Psoas muscle (tissue), 8 donors: ENCODE measurements at regions of chr2 and their contacts with region 1.

Region 1: GRCh38 chr2:32772638-32773447 is 145.0 kb downstream of the TTC27 start:
- DNase-seq: no peak
- ATAC-seq: peak; percentile 61 to 80 (median 62)
- H3K4me3 ChIP-seq: no peak overlapping the region
- H3K27ac ChIP-seq: no peak overlapping the region
- H3K4me1 ChIP-seq: no peaks in the 10 kb centered on the region
- H3K27me3 ChIP-seq: no peaks in the 10 kb centered on the region
- CTCF ChIP-seq: peak; percentile 77

Region 2: GRCh38 chr2:32671885-32672533 is 100.8 kb before region 1 on chr2:
- intact Hi-C with region 1: no loop called
- DNase-seq: no peak
- ATAC-seq: no peak
- H3K4me3 ChIP-seq: no peak overlapping the region
- H3K27ac ChIP-seq: no peak overlapping the region
- H3K4me1 ChIP-seq: no peaks in the 10 kb centered on the region
- H3K27me3 ChIP-seq: no peaks in the 10 kb centered on the region
- CTCF ChIP-seq: no peak

Region 3: DNA sequence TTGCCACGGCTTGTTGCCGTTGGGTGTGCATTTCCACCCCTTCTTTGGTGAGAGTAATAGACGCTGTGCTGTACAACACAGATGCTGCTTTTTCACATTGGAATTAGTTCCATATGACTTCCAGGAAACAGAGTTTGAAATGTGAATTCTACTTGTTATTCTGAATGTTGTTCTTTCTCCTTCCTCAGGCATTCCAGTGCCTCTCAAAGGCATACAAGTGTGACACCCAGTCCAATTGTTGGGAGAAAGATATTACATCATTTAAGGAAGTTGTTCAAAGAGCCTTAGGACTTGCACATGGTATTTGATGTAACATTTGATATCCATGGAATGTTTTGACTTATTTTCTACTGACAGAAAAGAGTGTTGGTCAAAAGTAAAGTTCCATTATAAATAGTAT is 39.5 kb after region 1 on chr2:
- intact Hi-C with region 1: no loop called
- DNase-seq: no peak
- ATAC-seq: no peak
- H3K4me3 ChIP-seq: no peak overlapping the region
- H3K27ac ChIP-seq: no peak overlapping the region
- H3K4me1 ChIP-seq: no peaks in the 10 kb centered on the region
- H3K27me3 ChIP-seq: no peaks in the 10 kb centered on the region
- CTCF ChIP-seq: no peak

Region 4: GRCh38 chr2:32863803-32864202 is 91.0 kb after region 1 on chr2:
- intact Hi-C with region 1: no loop called
- DNase-seq: no peak
- ATAC-seq: no peak
- H3K4me3 ChIP-seq: no peak overlapping the region
- H3K27ac ChIP-seq: no peak overlapping the region
- H3K4me1 ChIP-seq: no peaks in the 10 kb centered on the region
- H3K27me3 ChIP-seq: no peaks in the 10 kb centered on the region
- CTCF ChIP-seq: no peak

Region 5: GRCh38 chr2:33275689-33276444 is 503.0 kb after region 1 on chr2:
- intact Hi-C with region 1: loop called in 1 of 2 experiments (anchors 10 kb)
- DNase-seq: peak; percentile 63 to 82
- ATAC-seq: peak; percentile 54 to 84 (median 70)
- H3K4me3 ChIP-seq: no peak overlapping the region
- H3K27ac ChIP-seq: no peak overlapping the region
- H3K4me1 ChIP-seq: peaks cover 6% of the 10 kb centered on the region
- H3K27me3 ChIP-seq: no peaks in the 10 kb centered on the region
- CTCF ChIP-seq: no peak

Region 6: GRCh38 chr2:33552758-33553461 is 780.1 kb after region 1 on chr2:
- intact Hi-C with region 1: no loop called
- DNase-seq: no peak
- ATAC-seq: peak; percentile 47 to 76 (median 68)
- H3K4me3 ChIP-seq: no peak overlapping the region
- H3K27ac ChIP-seq: peak overlapping the region; percentile 33
- H3K4me1 ChIP-seq: peaks cover 15% of the 10 kb centered on the region
- H3K27me3 ChIP-seq: no peaks in the 10 kb centered on the region
- CTCF ChIP-seq: no peak